Activated CD4-positive, alpha-beta T cell treated with anti-CD3 and anti-CD28 coated beads, Interleukin-2, amount 10 ng/mL, durations not matched to agents 24 days and 14 days (primary cell): ENCODE measurements at regions of chr17 and their contacts with region 1.

Region 1: DNA sequence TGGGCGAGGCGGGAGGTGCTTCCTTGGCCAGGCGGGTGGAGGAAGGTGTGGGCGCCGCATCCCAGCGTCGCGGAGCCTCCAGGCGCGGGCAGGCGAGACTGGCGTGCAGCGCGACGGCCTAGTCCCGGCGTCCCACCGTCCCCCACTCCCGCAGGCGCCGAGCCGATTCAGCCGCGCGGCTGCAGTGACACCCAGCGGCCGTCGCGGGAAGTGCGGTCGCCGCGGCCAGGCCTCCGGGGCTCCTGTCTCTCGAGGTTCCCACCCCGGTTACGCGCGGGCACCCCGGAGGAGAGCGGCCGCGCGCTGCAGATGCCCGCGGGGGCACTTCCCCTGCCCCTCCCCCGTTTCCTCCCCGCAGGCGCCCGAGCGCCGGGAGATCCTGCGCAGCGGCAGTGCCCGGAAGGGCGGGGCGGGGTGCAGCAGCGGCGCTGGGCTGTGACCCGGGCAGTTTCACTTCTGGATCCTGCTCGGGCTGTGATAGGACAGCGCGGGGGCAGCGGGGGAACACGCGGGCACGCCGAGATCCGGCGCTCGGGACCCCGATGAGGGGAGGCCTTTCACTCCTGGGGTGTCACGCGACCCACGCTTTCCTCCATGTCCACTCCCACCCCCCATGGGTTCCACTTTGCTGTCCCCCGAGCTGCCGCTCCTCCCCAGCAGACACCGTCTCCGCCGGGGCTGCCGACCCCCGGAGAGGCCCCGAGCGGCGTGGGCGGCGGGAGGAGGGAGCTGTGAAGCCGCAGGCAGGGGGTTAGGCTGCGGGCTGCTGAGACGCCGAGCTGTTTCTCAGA is 16.6 kb downstream of the GRB7 start:
- DNase-seq: peak; percentile 99
- H3K4me3 Mint-ChIP-seq: peak overlapping the region; percentile 88
- H3K27ac Mint-ChIP-seq: peak overlapping the region; percentile 80
- H3K4me1 Mint-ChIP-seq: peaks cover 53% of the 10 kb centered on the region
- H3K27me3 Mint-ChIP-seq: no peaks in the 10 kb centered on the region

Region 2: DNA sequence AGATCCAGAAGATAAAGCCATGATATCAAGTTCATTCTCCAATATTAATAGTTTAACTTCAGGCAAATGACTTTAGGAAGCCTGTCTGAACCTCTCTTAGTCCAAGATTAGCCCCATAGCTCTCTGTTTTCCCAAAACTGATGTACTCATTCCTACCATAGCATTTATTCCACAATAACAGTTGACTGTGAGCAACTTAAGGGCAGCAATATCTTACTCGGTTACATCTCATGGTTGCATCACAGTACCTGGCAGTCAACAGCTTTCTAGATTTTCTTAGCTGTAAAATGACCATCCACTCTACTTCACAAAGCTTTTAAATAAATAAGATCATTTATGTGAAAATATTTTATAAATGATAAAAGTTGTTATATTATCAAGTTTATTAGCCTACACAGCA is 470.5 kb before region 1 on chr17:
- intact Hi-C with region 1: no loop called
- DNase-seq: no peak
- H3K4me3 Mint-ChIP-seq: no peak overlapping the region
- H3K27ac Mint-ChIP-seq: no peak overlapping the region
- H3K4me1 Mint-ChIP-seq: no peaks in the 10 kb centered on the region
- H3K27me3 Mint-ChIP-seq: no peaks in the 10 kb centered on the region

Region 3: DNA sequence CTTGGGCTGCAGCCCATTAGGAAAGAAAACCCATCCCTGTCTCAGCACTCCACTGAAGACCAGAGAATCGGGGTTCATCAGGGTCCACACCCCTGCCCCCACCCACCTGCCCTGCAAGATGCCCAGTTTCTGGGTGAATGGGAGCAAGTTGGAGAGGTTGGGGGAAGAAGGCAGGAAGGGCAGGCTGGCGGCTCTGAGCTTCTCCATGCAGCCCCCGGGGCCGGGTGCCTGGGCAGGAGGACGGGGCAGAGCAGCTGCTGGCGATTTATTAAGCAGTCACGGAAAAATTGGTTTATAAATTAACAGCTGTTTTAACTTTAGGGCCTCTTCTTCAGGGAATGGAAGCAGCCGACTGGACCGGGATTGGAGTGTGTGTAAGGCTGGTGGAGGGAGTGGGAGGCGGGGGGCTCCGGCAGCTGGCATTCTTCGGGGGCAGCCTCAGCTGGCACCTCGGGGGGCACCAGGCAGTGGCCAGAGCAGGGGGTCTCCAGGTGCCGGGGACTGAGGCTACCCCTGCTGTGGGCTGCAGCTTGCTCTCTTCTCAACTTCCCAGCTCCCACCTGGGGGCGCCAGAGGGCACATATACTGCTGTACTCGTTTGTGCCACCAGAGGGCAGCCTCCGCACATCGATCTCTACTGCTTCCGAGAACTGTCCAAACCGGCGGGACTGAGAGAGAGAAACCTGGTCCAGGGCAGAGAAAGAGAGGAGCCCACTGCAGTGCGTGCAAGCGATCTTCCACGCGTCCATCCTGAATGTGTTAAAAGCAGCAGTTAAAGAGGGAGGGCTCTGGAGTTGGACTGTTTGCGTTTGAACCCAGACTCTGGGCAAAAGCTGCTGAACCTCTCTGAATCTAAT is 132.6 kb before region 1 on chr17:
- intact Hi-C with region 1: loop called (anchors 1 kb)
- DNase-seq: peak; percentile 97
- H3K4me3 Mint-ChIP-seq: peak overlapping the region; percentile 76
- H3K27ac Mint-ChIP-seq: peak overlapping the region; percentile 62
- H3K4me1 Mint-ChIP-seq: peaks cover 17% of the 10 kb centered on the region
- H3K27me3 Mint-ChIP-seq: peaks cover 57% of the 10 kb centered on the region

Region 4: GRCh38 chr17:39668199-39668966 is 86.0 kb before region 1 on chr17 and contains the start of gene PNMT:
- intact Hi-C with region 1: no loop called
- DNase-seq: peak; percentile 91
- H3K4me3 Mint-ChIP-seq: peak within 1 kb of the TSS; percentile 73
- H3K27ac Mint-ChIP-seq: no peak within 1 kb of the TSS
- H3K4me1 Mint-ChIP-seq: peaks cover 8% of the 10 kb centered on the region
- H3K27me3 Mint-ChIP-seq: peaks cover 32% of the 10 kb centered on the region
- total RNA-seq, gene PNMT: not detected in 2 replicates

Region 5: GRCh38 chr17:39687811-39688518 is 66.4 kb before region 1 on chr17 and contains the start of gene PGAP3:
- intact Hi-C with region 1: loop called (anchors 5 kb)
- DNase-seq: peak; percentile 94
- H3K4me3 Mint-ChIP-seq: peak within 1 kb of the TSS; percentile 95
- H3K27ac Mint-ChIP-seq: peak within 1 kb of the TSS; percentile 92
- H3K4me1 Mint-ChIP-seq: peaks cover 14% of the 10 kb centered on the region
- H3K27me3 Mint-ChIP-seq: no peaks in the 10 kb centered on the region
- total RNA-seq, gene PGAP3: 12.5 and 13.5 TPM in 2 replicates

Region 6: DNA sequence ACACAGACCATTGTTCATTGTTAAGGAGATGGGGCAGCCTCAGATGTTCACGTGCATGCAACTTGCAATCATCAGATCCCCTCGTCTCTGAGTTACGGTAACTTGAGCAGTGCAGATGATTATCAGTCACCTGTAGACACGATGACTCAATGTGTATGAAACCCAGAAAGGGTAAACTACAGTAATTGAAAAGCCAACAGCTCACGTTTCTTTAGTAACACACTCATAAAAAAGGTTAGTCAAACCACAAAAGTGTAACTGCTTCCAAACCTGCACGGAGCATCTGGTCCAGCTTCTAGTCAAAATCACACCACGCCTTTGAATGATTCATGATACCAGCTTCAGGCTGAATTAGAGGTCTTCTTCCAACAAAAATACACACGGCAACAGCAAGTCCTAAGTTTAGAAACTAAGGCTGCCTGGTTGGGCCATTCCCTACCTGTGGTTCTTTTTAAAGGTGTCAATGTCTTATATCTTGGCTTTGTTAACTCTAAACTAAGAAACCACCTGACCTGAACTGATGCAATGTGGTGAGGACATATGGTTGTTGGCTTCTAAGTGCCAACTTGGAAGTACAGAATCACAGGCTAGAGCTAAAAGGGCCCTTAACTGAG is 15.7 kb after region 1 on chr17:
- intact Hi-C with region 1: loop called (anchors 1 kb)
- DNase-seq: peak; percentile 86
- H3K4me3 Mint-ChIP-seq: peak overlapping the region; percentile 13
- H3K27ac Mint-ChIP-seq: peak overlapping the region; percentile 74
- H3K4me1 Mint-ChIP-seq: peaks cover 69% of the 10 kb centered on the region
- H3K27me3 Mint-ChIP-seq: no peaks in the 10 kb centered on the region

Region 7: DNA sequence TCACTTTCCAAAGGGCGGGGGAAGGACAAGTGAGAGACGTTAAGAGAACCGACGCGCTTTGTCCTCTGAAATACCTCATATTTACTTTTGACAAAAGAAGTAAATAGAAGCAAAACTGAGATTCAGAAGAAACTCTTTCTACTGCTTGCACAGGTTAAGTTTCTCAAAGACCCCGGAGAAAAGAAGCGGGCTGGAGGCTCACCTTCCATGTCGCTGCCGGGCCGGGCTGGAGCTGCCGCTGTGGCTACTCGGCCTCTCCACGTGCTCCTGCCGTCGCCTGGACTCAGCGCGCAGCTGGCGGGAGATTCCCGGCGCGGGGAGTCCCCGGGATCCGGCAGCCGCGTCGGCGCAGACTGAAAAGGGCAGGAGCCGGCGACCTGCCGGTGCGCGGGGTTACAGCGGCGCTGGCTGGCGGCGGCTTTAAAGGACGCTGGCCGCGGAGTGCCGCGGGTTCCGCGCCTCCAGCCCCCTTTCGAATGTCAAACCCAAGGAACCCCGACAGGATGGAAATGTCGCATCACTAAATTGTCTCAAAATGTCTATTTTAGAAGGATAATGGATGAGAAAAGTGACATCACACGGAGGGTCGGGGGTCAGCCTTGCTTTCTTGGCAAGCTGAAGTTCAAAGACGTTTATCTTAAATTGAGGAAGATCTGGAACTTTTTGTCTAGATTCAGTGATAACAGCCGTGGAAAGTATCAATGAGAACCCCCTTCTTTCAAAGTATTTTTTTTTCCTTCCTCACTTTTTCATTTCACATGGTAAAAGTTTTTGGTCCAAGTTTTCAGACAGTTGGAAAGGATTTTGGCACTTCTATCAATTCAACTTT is 109.8 kb after region 1 on chr17 and contains the start of gene IKZF3:
- intact Hi-C with region 1: loop called (anchors 1 kb)
- DNase-seq: peak; percentile 95
- H3K4me3 Mint-ChIP-seq: peak within 1 kb of the TSS; percentile 90
- H3K27ac Mint-ChIP-seq: peak within 1 kb of the TSS; percentile 87
- H3K4me1 Mint-ChIP-seq: peaks cover 51% of the 10 kb centered on the region
- H3K27me3 Mint-ChIP-seq: peaks cover 4% of the 10 kb centered on the region
- total RNA-seq, gene IKZF3: 14.7 and 15.9 TPM in 2 replicates

Region 8: DNA sequence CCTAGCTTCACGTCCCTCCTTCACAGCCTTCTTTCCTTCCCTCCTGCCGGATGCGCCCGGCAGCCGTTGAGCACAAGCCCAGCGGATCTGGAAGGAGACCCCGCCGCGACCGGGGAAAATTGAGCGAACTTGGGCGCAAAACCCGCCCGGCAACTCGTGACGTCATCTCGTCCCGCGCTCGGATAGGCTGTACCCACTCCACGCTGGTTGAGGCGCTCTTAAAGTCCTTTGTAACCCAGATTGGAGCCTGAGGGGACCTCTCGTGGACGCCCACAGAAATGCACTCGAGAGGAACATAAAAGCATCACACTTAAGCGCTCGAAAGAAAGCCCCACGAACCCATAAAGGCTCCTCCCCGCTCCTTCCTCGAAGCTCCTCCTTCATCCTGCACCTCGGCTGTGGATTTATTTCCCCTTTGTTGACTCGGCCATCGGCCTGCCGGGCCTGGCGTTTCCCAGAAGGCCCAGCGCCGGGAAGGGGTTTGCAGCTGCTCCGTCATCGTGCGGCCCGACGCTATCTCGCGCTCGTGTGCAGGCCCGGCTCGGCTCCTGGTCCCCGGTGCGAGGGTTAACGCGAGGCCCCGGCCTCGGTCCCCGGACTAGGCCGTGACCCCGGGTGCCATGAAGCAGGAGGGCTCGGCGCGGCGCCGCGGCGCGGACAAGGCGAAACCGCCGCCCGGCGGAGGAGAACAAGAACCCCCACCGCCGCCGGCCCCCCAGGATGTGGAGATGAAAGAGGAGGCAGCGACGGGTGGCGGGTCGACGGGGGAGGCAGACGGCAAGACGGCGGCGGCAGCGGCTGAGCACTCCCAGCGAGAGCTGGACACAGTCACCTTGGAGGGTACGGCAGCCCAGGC is 226.2 kb after region 1 on chr17 and contains the start of gene PSMD3:
- intact Hi-C with region 1: loop called (anchors 1 kb)
- DNase-seq: peak; percentile 99
- H3K4me3 Mint-ChIP-seq: peak within 1 kb of the TSS; percentile 91
- H3K27ac Mint-ChIP-seq: peak within 1 kb of the TSS; percentile 92
- H3K4me1 Mint-ChIP-seq: peaks cover 28% of the 10 kb centered on the region
- H3K27me3 Mint-ChIP-seq: peaks cover 8% of the 10 kb centered on the region
- total RNA-seq, gene PSMD3: 199 and 204 TPM in 2 replicates